Right ventricle myocardium superior (tissue), 1 donor: ENCODE measurements at regions of chr20 and their contacts with region 1.

Region 1: GRCh38 chr20:3932681-3933080 is 43.5 kb downstream of the PANK2 start:
- DNase-seq: no peak
- ATAC-seq: no peak

Region 2: GRCh38 chr20:4064144-4064909 is 131.6 kb after region 1 on chr20:
- intact Hi-C with region 1: loop called (anchors 10 kb)
- DNase-seq: peak; percentile 95
- ATAC-seq: peak; percentile 93